ENCODE measurements at regions of chr19 and their contacts with region 1.

Region 1: GRCh38 chr19:48249502-48250014 is 6.2 kb downstream of the CARD8 start:
- DNase-seq: peak; percentile 52 to 76 (median 69)
- ATAC-seq: peak; percentile 82 to 96 (median 88)
- H3K4me3 ChIP-seq: peak overlapping the region in 11 of 12 donors; percentile 19 to 64 (median 47)
- H3K27ac ChIP-seq: peak overlapping the region; percentile 55 to 97 (median 73)
- H3K4me1 ChIP-seq: peaks cover 0 to 80% (median 31%) of the 10 kb centered on the region in 12 donors
- H3K27me3 ChIP-seq: no peaks in the 10 kb centered on the region
- CTCF ChIP-seq: no peak
- POLR2A ChIP-seq: peak in 1 of 2 donors; percentile 47

Region 2: GRCh38 chr19:48149430-48149829 is 100.1 kb before region 1 on chr19:
- intact Hi-C with region 1: no loop called
- DNase-seq: no peak
- ATAC-seq: no peak
- H3K4me3 ChIP-seq: no peak overlapping the region
- H3K27ac ChIP-seq: peak overlapping the region in 1 of 12 donors; percentile 26
- H3K4me1 ChIP-seq: no peaks in the 10 kb centered on the region
- H3K27me3 ChIP-seq: no peaks in the 10 kb centered on the region
- CTCF ChIP-seq: no peak
- POLR2A ChIP-seq: no peak

Region 3: DNA sequence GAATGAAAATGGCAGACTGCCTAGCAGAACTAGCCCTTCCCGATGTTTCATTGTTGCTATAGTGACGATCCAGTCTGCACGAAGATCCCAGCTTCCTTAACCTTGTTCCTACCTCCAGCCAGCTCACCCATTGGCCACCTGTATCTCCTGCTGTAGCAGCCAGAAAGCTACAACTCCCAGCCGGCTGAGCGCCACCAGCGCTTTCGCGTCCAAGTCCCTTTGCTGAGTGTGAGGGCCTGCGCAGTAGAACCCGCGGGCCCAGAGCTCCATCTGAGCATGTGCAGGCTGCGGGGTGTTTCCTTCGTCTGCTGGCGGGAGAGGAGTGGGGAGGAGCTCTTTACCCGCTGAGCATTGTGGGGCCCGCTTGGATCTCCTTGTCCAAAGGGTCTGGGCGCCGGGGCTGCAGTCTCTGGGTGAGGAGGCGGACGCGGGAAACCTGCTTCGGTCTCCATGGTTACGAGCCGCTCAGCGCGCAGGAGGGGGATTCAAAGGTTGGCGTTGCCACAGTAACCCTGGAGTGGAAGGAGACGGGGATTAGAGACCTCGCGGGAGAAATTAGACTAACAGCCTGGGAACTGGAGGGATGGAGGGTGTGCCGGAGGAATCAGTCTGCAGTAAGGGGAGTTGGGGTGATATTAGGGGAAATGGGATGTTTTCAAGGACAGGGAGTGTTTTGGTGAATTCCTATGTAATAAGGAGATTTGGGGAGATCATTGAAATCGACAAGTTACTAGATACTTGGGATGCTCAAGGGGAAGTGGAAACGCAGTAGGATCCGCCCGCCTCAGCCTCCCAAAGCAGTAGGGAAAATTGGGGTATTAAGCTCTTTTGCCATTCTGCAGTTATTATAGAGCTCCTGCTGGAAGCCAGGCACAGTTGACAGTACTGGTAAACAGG is 45.6 kb before region 1 on chr19:
- intact Hi-C with region 1: loop called in 3 of 10 experiments (anchors 5 to 10 kb)
- DNase-seq: peak; percentile 93 to 96 (median 96)
- ATAC-seq: peak; percentile 100
- H3K4me3 ChIP-seq: peak overlapping the region; percentile 8 to 97 (median 71)
- H3K27ac ChIP-seq: peak overlapping the region in 11 of 12 donors; percentile 50 to 84 (median 69)
- H3K4me1 ChIP-seq: peaks cover 0 to 25% (median 12%) of the 10 kb centered on the region in 12 donors
- H3K27me3 ChIP-seq: no peaks in the 10 kb centered on the region
- CTCF ChIP-seq: peak in 2 of 12 donors; percentile 2 to 32
- POLR2A ChIP-seq: peak in 1 of 2 donors; percentile 69

Region 4: DNA sequence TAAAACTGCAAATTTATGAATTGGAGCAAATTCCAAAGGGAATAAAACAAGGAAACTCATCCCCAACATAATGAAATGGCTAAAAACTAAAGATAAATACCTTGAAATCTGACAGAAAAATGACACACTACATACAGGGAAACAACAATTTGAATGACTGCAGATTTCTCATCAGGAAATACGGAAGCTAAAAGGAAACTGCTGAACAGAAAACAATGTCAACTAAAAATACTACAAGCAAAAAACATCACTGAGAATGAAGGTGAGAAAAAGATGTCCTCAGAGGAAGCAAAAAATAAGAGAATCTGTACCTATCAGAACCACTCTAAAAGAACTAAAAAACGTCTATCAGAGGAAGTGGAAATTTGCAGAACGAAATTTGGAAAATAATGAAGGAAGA is 39.6 kb before region 1 on chr19:
- intact Hi-C with region 1: loop called in 2 of 10 experiments (anchors 5 to 10 kb)
- DNase-seq: no peak
- ATAC-seq: no peak
- H3K4me3 ChIP-seq: no peak overlapping the region
- H3K27ac ChIP-seq: peak overlapping the region in 2 of 12 donors; percentile 25 to 63
- H3K4me1 ChIP-seq: peaks cover 0 to 11% (median 0%) of the 10 kb centered on the region in 12 donors
- H3K27me3 ChIP-seq: no peaks in the 10 kb centered on the region
- CTCF ChIP-seq: no peak
- POLR2A ChIP-seq: no peak

Region 5: DNA sequence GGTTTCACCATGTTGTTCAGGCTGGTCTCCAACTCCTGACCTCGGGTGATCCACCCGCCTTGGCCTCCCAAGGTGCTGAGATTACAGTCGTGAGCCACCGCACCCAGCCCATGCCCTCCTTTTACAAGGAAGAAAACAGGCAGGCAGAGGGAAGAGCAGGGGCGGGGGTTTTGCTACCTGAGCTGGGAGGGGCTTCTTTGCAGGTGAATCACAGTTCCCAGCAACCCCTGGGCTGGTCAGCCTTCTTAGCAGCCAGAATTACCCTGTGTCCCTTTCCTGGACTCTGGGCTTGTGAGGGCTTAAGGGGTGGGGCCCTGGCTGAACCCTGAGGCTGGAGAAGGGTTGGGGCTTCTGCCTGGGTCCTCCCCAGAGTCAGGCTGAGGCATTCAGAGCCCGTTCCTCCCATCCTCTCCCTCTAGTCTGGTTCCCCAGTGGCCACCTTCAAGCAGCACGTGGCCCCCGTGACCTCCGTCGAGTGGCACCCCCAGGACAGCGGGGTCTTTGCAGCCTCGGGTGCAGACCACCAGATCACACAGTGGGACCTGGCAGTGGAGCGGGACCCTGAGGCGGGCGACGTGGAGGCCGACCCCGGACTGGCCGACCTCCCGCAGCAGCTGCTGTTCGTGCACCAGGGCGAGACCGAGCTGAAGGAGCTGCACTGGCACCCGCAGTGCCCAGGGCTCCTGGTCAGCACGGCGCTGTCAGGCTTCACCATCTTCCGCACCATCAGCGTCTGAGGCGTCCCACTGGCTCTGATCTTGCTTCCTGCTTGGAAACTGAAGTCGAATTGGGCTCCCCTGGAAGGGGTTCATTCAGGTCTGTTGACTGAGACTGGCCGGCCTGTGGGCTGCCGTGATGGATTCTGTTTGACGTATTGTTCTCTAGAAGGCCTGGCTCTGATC is 203.0 kb after region 1 on chr19:
- intact Hi-C with region 1: no loop called
- DNase-seq: no peak
- ATAC-seq: no peak
- H3K4me3 ChIP-seq: no peak overlapping the region
- H3K27ac ChIP-seq: no peak overlapping the region
- H3K4me1 ChIP-seq: no peaks in the 10 kb centered on the region
- H3K27me3 ChIP-seq: no peaks in the 10 kb centered on the region
- CTCF ChIP-seq: no peak
- POLR2A ChIP-seq: no peak

Measured in heart left ventricle (tissue), 16 donors.